ENCODE measurements at regions of chr6 and their contacts with region 1.

Region 1: DNA sequence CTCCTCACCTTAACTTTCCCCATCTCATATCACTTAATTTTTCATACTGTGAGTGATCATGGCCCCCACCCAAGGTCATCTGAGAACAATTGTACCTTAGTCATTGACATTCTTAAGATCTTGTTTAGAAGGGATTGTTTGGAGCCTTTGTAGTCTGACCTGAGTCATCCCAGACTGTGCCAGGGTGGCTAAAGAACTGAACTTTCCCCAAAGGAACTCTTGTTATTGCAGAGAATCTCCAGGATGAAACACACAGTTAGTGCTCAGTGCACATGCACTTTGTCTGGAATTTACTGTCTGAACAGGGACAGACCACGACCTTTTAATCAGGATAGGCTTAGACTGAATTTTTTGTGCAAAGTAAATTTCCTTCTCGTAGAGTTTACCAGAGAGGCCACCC is 112.6 kb upstream of the CCN2 start:
- DNase-seq: no peak
- ATAC-seq: peak in 1 of 4 donors; percentile 41
- H3K4me3 ChIP-seq: no peak overlapping the region
- H3K27ac ChIP-seq: no peak overlapping the region
- H3K4me1 ChIP-seq: no peaks in the 10 kb centered on the region
- H3K27me3 ChIP-seq: no peaks in the 10 kb centered on the region
- CTCF ChIP-seq: no peak

Region 2: GRCh38 chr6:132190097-132190814 is 126.5 kb after region 1 on chr6:
- intact Hi-C with region 1: loop called in 1 of 3 experiments (anchors 10 kb)
- DNase-seq: no peak
- ATAC-seq: no peak
- H3K4me3 ChIP-seq: no peak overlapping the region
- H3K27ac ChIP-seq: no peak overlapping the region
- H3K4me1 ChIP-seq: no peaks in the 10 kb centered on the region
- H3K27me3 ChIP-seq: no peaks in the 10 kb centered on the region
- CTCF ChIP-seq: no peak

Measured in pancreas (tissue), 10 donors.